A673 (cell line): ENCODE measurements at regions of chr1 and their contacts with region 1.

Region 1: GRCh38 chr1:156602557-156602993 is 1.3 kb upstream of the GPATCH4 start:
- DNase-seq: peak; percentile 64
- H3K4me3 ChIP-seq: no peak overlapping the region
- H3K27ac ChIP-seq: no peak overlapping the region
- H3K4me1 ChIP-seq: peaks cover 9% of the 10 kb centered on the region
- H3K27me3 ChIP-seq: no peaks in the 10 kb centered on the region
- CTCF ChIP-seq: peak; percentile 70

Region 2: DNA sequence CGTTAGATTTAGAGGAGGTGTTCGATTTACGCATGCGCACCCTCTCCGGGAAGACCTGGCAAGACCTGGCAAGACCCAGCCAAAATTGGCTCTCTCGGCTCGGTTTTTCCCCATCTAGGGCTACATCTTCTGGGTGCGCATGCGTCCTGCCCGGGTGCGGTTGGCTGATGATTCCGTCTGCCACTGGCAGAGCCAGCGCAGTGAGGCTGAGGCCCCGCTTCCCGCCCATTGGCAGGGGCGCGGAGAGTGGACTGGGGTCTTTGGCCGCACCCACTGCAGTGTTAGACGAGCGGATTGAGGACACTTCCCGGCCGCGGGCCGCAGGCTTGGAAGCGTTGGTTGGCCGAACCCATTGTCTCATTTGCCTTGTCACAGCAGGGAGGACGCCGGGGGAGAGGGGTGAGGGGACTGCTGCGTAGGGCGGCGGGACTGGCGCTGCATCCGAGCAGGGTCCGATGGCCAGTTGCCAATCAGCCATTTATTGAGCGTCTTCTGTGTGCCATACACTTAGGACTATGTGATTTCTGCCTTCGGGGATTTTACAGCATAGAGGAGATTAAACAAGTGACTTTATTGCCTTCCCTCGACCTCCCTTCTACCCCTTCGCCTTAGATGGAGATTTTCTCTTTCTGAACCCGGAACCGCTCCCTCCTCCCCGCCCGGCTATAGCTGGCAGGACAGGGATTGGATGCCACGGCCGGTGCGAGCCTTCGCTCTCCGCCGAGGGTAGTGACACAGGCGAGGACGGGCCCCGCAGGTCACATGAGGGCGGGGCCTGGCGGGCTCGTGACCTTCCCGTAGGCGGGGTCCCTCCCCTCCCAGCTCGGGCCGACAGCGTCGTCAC is 145.7 kb before region 1 on chr1:
- CTCF ChIA-PET with region 1: interaction called, 14 read pairs
- POLR2A ChIA-PET with region 1: no interaction called
- intact Hi-C with region 1: no loop called
- DNase-seq: peak; percentile 96
- H3K4me3 ChIP-seq: peak overlapping the region; percentile 45
- H3K27ac ChIP-seq: peak overlapping the region; percentile 8
- H3K4me1 ChIP-seq: no peaks in the 10 kb centered on the region
- H3K27me3 ChIP-seq: no peaks in the 10 kb centered on the region
- CTCF ChIP-seq: no peak

Region 3: DNA sequence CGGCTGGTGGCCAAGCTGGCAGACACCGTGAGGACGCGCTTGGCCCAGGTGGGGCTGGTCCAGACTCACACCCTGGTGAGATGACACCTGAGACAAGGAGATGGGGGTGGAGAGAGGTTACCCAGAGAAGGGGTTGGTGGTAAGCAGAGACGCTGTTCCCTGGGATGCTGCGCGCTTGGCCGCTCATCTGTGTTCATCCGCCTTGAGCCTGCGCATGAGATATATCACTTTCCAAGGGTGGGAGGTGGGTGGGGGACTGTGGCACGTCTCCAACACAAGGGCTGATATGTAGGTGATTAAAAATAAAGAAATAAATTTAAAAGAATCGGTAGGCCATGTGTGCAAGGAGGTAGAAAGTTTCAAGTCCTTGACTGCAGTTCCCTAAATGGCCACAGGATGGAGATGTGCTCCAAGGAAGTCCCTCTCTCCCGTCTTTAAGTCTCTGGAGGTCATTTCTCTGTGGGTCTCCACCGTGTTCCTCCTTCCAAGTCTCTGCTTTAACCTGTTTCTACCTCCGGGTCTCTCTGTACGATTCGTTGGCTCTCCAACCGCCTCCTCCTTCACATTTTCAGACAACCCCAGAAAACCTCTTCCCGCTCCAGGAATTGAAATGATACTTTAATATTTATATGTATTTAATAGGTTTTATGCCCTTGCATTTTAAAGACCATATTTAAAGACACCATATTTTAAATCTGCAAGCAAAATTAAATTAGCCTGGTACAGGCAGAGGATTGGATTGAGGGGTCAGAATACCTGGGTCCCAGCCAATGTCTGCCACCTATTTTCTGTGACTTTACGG is 18.6 kb before region 1 on chr1:
- CTCF ChIA-PET with region 1: no interaction called
- POLR2A ChIA-PET with region 1: no interaction called
- intact Hi-C with region 1: no loop called
- DNase-seq: peak; percentile 86
- H3K4me3 ChIP-seq: no peak overlapping the region
- H3K27ac ChIP-seq: no peak overlapping the region
- H3K4me1 ChIP-seq: no peaks in the 10 kb centered on the region
- H3K27me3 ChIP-seq: no peaks in the 10 kb centered on the region
- CTCF ChIP-seq: peak; percentile 85

Region 4: GRCh38 chr1:157124855-157125254 is 522.3 kb after region 1 on chr1:
- CTCF ChIA-PET with region 1: no interaction called
- POLR2A ChIA-PET with region 1: no interaction called
- intact Hi-C with region 1: no loop called
- DNase-seq: peak; percentile 28
- H3K4me3 ChIP-seq: no peak overlapping the region
- H3K27ac ChIP-seq: no peak overlapping the region
- H3K4me1 ChIP-seq: peaks cover 3% of the 10 kb centered on the region
- H3K27me3 ChIP-seq: no peaks in the 10 kb centered on the region
- CTCF ChIP-seq: no peak